GM12878 (cell line): ENCODE measurements at regions of chr2 and their contacts with region 1.

Region 1: DNA sequence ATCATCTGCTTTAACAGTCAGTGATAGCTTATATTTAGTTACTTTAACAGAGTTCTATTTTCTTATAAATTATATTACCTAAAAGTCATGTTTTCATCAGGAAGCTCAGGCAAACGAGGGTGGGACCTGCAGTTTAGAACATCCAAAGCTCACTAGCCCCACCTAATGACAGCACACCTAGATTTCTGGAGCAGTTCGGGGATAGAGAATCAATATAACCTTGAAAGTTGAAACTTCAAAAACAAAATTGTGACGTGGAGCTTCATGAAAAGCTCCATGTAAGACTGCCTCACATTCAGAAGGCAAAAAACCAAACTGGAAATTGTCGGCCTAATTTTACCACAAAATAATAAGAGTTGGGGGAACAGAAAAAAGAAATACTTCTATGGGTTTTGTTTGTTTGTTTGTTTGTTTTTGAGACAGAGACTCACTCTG is 185.9 kb upstream of the CCDC150 start:
- DNase-seq: peak; percentile 72
- ATAC-seq: peak; percentile 90
- H3K4me3 ChIP-seq: no peak overlapping the region
- H3K27ac ChIP-seq: peak overlapping the region; percentile 64
- H3K4me1 ChIP-seq: peaks cover 10% of the 10 kb centered on the region
- H3K27me3 ChIP-seq: no peaks in the 10 kb centered on the region
- CTCF ChIP-seq: peak; percentile 74 to 81 (median 79)
- EP300 ChIP-seq: no peak
- POLR2A ChIP-seq: no peak
- RAD21 ChIP-seq: peak; percentile 99

Region 2: DNA sequence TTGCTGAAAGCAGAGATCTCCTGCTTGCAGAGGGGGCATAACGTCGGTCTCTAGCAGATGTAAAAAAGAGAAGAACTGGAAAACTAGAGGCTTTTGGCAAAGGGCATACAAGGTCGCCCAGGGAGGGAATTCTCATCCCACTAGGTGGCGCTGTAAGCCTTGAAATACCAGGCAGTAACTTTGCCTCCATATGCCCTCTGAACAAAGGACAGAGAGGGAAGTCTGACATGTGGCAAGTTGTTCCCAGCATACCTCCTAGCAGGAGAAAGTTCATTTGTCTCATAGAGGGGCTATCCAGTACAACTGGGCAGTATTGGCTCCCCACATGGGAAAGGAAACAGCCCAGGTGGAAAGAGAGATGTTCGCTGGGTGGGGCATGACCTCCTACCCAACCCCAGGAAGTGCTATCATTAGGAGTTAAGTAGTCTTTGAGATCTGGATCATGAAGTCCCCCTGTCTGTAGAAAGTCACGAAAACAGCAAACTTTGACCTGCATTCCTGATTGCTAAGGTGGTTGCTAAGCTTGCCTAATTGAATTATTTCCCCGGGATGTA is 322.2 kb before region 1 on chr2:
- CTCF ChIA-PET with region 1: interaction called, 10 read pairs
- POLR2A ChIA-PET with region 1: no interaction called
- RAD21 ChIA-PET with region 1: interaction called, 4 read pairs
- SMC1A ChIA-PET with region 1: interaction called, 9 read pairs
- in situ Hi-C with region 1: no loop called
- intact Hi-C with region 1: no loop called
- DNase-seq: peak; percentile 47
- ATAC-seq: peak; percentile 74
- H3K4me3 ChIP-seq: no peak overlapping the region
- H3K27ac ChIP-seq: no peak overlapping the region
- H3K4me1 ChIP-seq: no peaks in the 10 kb centered on the region
- H3K27me3 ChIP-seq: no peaks in the 10 kb centered on the region
- CTCF ChIP-seq: peak; percentile 39 to 53 (median 49); a peak in 5 of 6 replicates
- EP300 ChIP-seq: no peak
- POLR2A ChIP-seq: no peak
- RAD21 ChIP-seq: peak; percentile 62

Region 3: DNA sequence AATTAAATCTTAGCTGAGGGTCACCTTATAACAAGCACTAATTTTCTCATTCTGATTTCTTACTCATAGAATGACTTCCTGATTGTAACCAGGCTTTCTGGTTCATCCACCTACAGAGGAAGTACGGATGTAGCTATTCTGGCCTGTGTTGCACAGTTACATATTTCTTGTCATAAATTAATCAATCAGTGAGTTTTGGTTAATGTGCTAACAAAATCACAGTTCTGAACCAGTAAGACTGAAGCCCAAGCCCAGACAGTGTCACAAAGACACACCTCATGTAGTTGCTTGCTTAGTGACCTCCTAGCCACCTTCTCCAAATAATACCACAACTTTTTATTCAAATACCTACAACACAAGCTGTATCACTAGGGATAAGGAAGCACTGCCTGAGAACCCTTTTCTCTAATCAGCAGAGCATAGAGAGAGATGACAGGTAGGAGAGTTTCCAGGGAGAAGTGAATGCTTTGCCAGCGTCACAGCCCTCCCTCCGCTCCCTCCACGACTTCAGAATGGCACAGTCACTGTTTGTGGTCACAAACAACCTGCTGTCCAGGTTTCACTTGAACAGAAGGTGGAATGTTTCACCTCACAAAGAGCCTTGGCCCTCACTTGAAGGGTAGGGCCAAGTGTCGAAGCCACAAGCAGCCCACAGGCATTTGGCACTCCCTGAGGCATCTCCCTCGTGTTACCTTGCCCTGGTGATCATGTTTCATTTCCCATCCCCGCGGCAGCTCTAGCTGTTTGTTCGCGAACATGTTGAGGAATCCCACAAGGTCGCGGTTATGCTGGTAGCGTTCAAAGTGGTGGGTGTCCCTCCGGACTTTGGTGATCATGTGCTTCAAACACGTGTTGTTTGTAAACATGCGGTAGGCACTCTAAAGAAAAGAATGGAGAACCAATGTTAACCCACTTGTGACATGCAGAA is 161.5 kb before region 1 on chr2:
- CTCF ChIA-PET with region 1: interaction called, 30 read pairs
- POLR2A ChIA-PET with region 1: interaction called, 4 read pairs
- RAD21 ChIA-PET with region 1: interaction called, 21 read pairs
- SMC1A ChIA-PET with region 1: interaction called, 52 read pairs
- in situ Hi-C with region 1: loop called (anchors 5 kb)
- intact Hi-C with region 1: no loop called
- DNase-seq: no peak
- ATAC-seq: peak; percentile 10
- H3K4me3 ChIP-seq: no peak overlapping the region
- H3K27ac ChIP-seq: peak overlapping the region; percentile 51; the same call in 1 of the 2 replicates
- H3K4me1 ChIP-seq: peaks cover 32% of the 10 kb centered on the region
- H3K27me3 ChIP-seq: no peaks in the 10 kb centered on the region
- CTCF ChIP-seq: no peak
- EP300 ChIP-seq: no peak
- POLR2A ChIP-seq: no peak
- RAD21 ChIP-seq: no peak

Region 4: GRCh38 chr2:196344397-196344796 is 109.2 kb before region 1 on chr2:
- CTCF ChIA-PET with region 1: interaction called, 60 read pairs
- POLR2A ChIA-PET with region 1: interaction called, 4 read pairs
- RAD21 ChIA-PET with region 1: interaction called, 51 read pairs
- SMC1A ChIA-PET with region 1: interaction called, 46 read pairs
- in situ Hi-C with region 1: no loop called
- intact Hi-C with region 1: no loop called
- DNase-seq: no peak
- ATAC-seq: peak; percentile 70
- H3K4me3 ChIP-seq: no peak overlapping the region
- H3K27ac ChIP-seq: no peak overlapping the region
- H3K4me1 ChIP-seq: no peaks in the 10 kb centered on the region
- H3K27me3 ChIP-seq: no peaks in the 10 kb centered on the region
- CTCF ChIP-seq: no peak
- EP300 ChIP-seq: no peak
- POLR2A ChIP-seq: no peak
- RAD21 ChIP-seq: no peak

Region 5: GRCh38 chr2:196399722-196400691 is 53.6 kb before region 1 on chr2:
- CTCF ChIA-PET with region 1: interaction called, 21 read pairs
- POLR2A ChIA-PET with region 1: interaction called, 7 read pairs
- RAD21 ChIA-PET with region 1: interaction called, 28 read pairs
- SMC1A ChIA-PET with region 1: interaction called, 46 read pairs
- in situ Hi-C with region 1: no loop called
- intact Hi-C with region 1: no loop called
- DNase-seq: no peak
- ATAC-seq: no peak
- H3K4me3 ChIP-seq: peak overlapping the region; percentile 4; the same call in 1 of the 2 replicates
- H3K27ac ChIP-seq: peak overlapping the region; percentile 44
- H3K4me1 ChIP-seq: no peaks in the 10 kb centered on the region
- H3K27me3 ChIP-seq: no peaks in the 10 kb centered on the region
- CTCF ChIP-seq: no peak
- EP300 ChIP-seq: no peak
- POLR2A ChIP-seq: no peak
- RAD21 ChIP-seq: no peak

Region 6: GRCh38 chr2:196468394-196468793 is 14.8 kb after region 1 on chr2:
- CTCF ChIA-PET with region 1: interaction called, 42 read pairs
- POLR2A ChIA-PET with region 1: no interaction called
- RAD21 ChIA-PET with region 1: interaction called, 19 read pairs
- SMC1A ChIA-PET with region 1: interaction called, 15 read pairs
- in situ Hi-C with region 1: no loop called
- intact Hi-C with region 1: no loop called
- DNase-seq: no peak
- ATAC-seq: no peak
- H3K4me3 ChIP-seq: no peak overlapping the region
- H3K27ac ChIP-seq: no peak overlapping the region
- H3K4me1 ChIP-seq: no peaks in the 10 kb centered on the region
- H3K27me3 ChIP-seq: no peaks in the 10 kb centered on the region
- CTCF ChIP-seq: peak; percentile 5 to 24 (median 5); a peak in 1 of 6 replicates
- EP300 ChIP-seq: no peak
- POLR2A ChIP-seq: no peak
- RAD21 ChIP-seq: peak; percentile 53